ENCODE measurements at regions of chr17 and their contacts with region 1.

Region 1: DNA sequence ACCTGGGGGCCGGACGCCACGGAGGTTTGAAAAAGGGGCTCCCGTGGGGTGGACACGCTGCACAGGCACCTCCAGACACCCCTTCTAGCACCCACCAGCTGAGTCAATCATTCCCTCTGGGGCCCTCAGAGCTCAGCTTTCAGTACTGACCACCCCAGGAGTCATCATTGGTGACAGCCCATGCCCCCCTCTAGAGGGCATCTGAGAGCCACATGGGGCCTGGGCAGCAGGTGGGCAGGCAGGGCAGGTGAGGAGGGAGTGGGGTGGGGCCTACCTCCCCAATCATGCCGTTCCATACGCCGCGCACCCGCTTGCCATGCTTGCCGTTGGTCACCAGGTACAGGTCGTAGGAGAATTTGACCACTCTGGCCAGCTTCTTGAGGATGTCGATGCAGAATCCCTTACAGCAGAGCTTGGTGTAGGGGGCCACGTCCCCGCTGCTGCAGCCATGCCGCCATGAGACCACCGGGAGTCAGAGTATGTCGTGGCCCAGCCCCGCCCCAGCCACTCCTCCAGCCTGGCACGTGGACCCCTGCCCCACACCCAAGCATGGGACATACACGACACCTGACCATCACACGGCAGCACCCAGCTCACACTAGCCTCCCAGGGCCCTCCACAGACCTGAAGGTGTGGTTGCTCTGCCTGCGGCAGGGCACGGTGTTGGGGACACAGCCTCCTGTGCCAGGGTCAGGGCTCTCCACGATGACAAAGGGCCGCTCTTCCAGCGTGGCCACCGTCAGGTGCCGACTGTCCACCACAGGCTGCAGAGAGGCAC is 9.6 kb downstream of the GRIN2C start:
- DNase-seq: no peak
- H3K4me3 ChIP-seq: no peak overlapping the region
- H3K27ac ChIP-seq: no peak overlapping the region
- H3K4me1 ChIP-seq: peaks cover 0 to 13% (median 11%) of the 10 kb centered on the region in 4 donors
- H3K27me3 ChIP-seq: peaks cover 54% of the 10 kb centered on the region
- CTCF ChIP-seq: no peak
- EP300 ChIP-seq: no peak
- POLR2A ChIP-seq: no peak

Region 2: GRCh38 chr17:73501431-73501830 is 1348.7 kb before region 1 on chr17:
- in situ Hi-C with region 1: no loop called
- intact Hi-C with region 1: no loop called
- DNase-seq: no peak
- H3K4me3 ChIP-seq: no peak overlapping the region
- H3K27ac ChIP-seq: no peak overlapping the region
- H3K4me1 ChIP-seq: no peaks in the 10 kb centered on the region
- H3K27me3 ChIP-seq: no peaks in the 10 kb centered on the region
- CTCF ChIP-seq: no peak
- EP300 ChIP-seq: no peak
- POLR2A ChIP-seq: no peak

Region 3: GRCh38 chr17:74803971-74804370 is 46.1 kb before region 1 on chr17:
- in situ Hi-C with region 1: loop called in 1 of 4 experiments (anchors 5 kb)
- intact Hi-C with region 1: no loop called
- DNase-seq: no peak
- H3K4me3 ChIP-seq: no peak overlapping the region
- H3K27ac ChIP-seq: peak overlapping the region in 1 of 4 donors; percentile 48
- H3K4me1 ChIP-seq: peaks cover 0 to 5% (median 0%) of the 10 kb centered on the region in 4 donors
- H3K27me3 ChIP-seq: no peaks in the 10 kb centered on the region
- CTCF ChIP-seq: no peak
- EP300 ChIP-seq: no peak
- POLR2A ChIP-seq: no peak

Region 4: GRCh38 chr17:75589012-75589918 is 739.1 kb after region 1 on chr17:
- in situ Hi-C with region 1: no loop called
- intact Hi-C with region 1: no loop called
- DNase-seq: peak; percentile 97
- H3K4me3 ChIP-seq: peak overlapping the region; percentile 33 to 59 (median 57)
- H3K27ac ChIP-seq: peak overlapping the region; percentile 84 to 93 (median 89)
- H3K4me1 ChIP-seq: peaks cover 9 to 28% (median 22%) of the 10 kb centered on the region in 4 donors
- H3K27me3 ChIP-seq: no peaks in the 10 kb centered on the region
- CTCF ChIP-seq: peak; percentile 35 to 81 (median 54)
- EP300 ChIP-seq: no peak
- POLR2A ChIP-seq: no peak

Measured in transverse colon (tissue), 4 donors.